Panc1 (cell line): ENCODE measurements at regions of chr2 and their contacts with region 1.

Region 1: DNA sequence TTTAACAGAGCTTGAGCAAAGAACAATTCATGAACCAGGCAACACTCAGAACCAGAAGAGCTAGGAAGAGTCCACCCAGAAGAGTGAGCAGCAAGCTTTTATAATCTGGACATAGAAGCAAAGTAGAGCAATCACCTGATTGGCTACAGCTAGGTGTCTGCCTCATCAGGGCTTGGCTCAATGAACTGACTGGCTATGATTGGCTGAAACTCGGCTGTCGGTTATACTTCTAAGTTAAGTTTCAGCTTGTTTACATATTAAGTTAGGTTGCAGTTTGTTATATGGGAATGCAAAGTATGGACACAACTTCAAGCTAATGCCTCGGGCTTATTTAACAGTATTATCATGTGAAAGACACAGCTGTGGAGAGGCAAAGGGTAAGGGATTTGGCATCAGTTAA is 63.2 kb upstream of the NABP1 start:
- DNase-seq: no peak
- ATAC-seq: no peak
- H3K4me3 ChIP-seq: no peak overlapping the region
- H3K27ac ChIP-seq: no peak overlapping the region
- H3K4me1 ChIP-seq: no peaks in the 10 kb centered on the region
- H3K27me3 ChIP-seq: no peaks in the 10 kb centered on the region
- CTCF ChIP-seq: no peak

Region 2: GRCh38 chr2:191995285-191995684 is 380.5 kb after region 1 on chr2:
- CTCF ChIA-PET with region 1: no interaction called
- POLR2A ChIA-PET with region 1: no interaction called
- in situ Hi-C with region 1: no loop called
- intact Hi-C with region 1: no loop called
- DNase-seq: no peak
- ATAC-seq: no peak
- H3K4me3 ChIP-seq: no peak overlapping the region
- H3K27ac ChIP-seq: no peak overlapping the region
- H3K4me1 ChIP-seq: no peaks in the 10 kb centered on the region
- H3K27me3 ChIP-seq: no peaks in the 10 kb centered on the region
- CTCF ChIP-seq: no peak

Region 3: DNA sequence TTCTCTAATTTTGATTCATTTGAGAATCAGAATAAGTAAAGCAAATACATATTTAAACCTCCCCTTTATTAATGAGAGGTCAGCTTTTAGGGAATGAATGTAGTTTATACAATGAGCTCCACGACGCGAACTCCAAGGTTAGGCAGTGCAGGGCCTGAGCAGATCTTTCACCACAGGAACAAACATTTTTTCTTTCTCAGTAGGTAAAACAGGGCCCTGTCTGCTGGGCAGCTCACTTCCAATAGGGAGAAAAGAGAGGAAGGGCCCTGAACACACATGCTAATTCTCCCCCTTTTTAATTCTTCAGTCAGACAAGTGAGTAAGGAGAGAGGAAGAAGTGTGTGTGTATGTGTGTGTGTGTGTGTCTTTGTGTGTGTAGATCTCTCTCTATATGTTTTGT is 1262.4 kb after region 1 on chr2:
- CTCF ChIA-PET with region 1: no interaction called
- POLR2A ChIA-PET with region 1: interaction called, 10 read pairs
- in situ Hi-C with region 1: no loop called
- intact Hi-C with region 1: no loop called
- DNase-seq: no peak
- ATAC-seq: no peak
- H3K4me3 ChIP-seq: no peak overlapping the region
- H3K27ac ChIP-seq: no peak overlapping the region
- H3K4me1 ChIP-seq: no peaks in the 10 kb centered on the region
- H3K27me3 ChIP-seq: no peaks in the 10 kb centered on the region
- CTCF ChIP-seq: no peak